ENCODE measurements at regions of chr17 and their contacts with region 1.

Region 1: DNA sequence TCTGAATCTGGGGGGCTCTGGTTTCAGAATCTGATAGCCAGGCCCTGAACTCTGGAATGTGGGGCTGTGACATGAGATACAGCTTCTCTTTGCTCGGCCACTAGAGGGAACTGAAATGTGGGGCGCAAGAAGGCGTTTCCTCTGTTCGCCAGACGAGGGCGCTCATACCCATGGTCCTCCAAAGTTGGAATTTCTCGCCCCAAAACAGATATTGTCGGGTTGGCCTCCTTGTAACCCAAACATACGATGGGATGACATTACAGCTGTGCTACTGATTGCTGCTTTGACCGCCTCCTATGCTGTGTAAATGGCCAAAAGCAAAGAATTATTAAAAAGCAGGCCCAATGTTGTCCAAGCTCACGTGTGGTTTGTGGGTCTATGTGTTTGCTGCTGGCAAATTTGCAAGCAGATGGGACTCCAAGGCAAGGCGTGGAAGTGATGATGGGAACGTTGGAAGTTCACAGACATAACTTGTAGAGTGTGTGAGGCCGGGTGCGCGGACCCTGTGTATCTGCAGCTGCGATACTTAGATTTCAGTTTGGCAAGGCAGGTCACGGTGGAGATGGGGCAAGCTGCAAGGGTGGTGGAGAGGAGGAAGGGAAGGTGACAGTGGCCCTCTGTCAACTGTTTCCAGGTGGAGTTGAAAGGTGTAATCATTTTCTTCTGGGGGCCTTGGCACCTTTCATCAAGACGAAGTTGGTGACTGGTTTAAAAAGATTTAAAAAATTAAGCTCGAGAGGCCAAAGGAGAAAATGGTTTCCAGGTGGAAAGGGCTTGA is 13.0 kb upstream of the MSI2 start:
- DNase-seq: peak; percentile 88
- H3K4me3 Mint-ChIP-seq: no peak overlapping the region
- H3K27ac Mint-ChIP-seq: no peak overlapping the region
- H3K4me1 Mint-ChIP-seq: no peaks in the 10 kb centered on the region
- H3K27me3 Mint-ChIP-seq: no peaks in the 10 kb centered on the region

Region 2: GRCh38 chr17:57033295-57033694 is 210.1 kb before region 1 on chr17:
- CTCF ChIA-PET with region 1: no interaction called
- intact Hi-C with region 1: no loop called
- DNase-seq: no peak
- H3K4me3 Mint-ChIP-seq: no peak overlapping the region
- H3K27ac Mint-ChIP-seq: no peak overlapping the region
- H3K4me1 Mint-ChIP-seq: no peaks in the 10 kb centered on the region
- H3K27me3 Mint-ChIP-seq: peaks cover 19% of the 10 kb centered on the region

Region 3: DNA sequence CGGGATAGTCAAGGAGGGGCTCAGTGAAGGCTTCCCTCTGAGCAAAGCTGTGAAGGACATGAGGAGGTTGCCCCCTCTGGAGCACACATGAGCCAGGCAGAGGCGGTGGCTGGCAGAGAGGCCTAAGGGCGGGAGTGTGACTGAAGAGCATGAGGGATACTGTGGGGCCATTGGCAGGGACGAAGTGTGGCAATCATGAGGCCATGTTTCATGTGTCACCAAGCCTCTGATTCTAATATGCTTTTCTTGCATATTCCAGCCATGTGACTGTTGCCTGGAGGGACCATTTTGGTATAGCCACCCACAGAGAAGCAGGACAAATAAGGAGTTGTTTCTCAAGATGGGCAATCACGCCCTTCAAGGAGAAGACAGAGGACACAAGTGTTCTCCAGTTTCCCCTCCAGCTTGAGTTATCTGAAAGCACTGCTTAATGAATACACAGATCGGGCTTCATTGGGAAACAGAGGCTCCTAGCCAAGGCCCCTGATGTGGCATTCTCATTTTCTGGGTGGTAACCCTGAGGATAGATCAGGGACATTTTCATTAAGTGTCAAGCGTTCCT is 90.3 kb before region 1 on chr17:
- CTCF ChIA-PET with region 1: no interaction called
- intact Hi-C with region 1: no loop called
- DNase-seq: no peak
- H3K4me3 Mint-ChIP-seq: no peak overlapping the region
- H3K27ac Mint-ChIP-seq: no peak overlapping the region
- H3K4me1 Mint-ChIP-seq: no peaks in the 10 kb centered on the region
- H3K27me3 Mint-ChIP-seq: peaks cover 5% of the 10 kb centered on the region

Region 4: DNA sequence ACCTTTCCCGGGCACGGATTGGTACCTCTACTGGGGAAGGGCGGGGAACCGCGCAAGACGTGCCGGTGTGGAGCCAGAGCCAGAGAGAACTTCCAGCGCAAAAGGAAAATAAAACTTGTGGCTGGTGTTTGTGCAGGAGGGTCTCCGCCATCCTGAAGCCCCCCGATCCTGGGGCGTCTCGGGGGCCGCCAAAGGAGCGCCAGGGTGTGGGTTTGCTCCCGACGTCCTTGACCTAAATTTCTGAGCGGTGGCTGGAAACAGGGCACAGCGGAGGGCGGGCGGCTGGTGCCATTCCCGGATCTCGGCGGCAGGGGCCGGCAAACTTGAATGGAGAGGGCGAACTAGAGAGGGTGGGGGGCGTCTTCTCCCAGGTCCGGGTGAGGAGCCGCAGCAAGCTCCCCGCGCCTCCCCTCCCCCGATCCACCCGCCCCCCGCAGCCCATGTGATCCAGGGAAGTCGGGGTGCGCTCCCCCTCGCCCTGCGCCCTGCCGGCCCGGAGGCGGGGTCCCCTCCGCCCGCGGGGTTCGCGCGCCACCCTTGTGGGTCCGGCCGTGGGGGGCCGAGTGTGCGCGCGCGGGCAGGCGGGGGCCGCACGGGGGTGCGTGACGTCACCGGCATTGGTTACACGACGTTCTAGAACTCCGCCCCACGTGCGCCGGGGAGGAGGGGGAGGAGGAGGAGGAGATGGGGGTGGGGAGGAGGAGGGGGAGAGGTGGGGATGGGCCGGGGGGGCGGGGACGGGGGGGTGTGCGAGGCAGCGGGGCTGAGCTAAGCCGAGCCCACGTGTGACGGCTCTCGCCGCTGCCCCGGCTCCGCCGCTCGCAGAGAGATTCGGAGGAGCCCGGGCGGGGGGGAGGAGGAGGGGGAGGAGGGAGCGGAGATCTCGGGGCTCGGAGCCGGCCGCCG is 12.7 kb after region 1 on chr17 and contains the start of gene MSI2:
- CTCF ChIA-PET with region 1: interaction called, 33 read pairs
- intact Hi-C with region 1: no loop called
- DNase-seq: peak; percentile 88
- H3K4me3 Mint-ChIP-seq: peak within 1 kb of the TSS; percentile 90
- H3K27ac Mint-ChIP-seq: peak within 1 kb of the TSS; percentile 86
- H3K4me1 Mint-ChIP-seq: peaks cover 38% of the 10 kb centered on the region
- H3K27me3 Mint-ChIP-seq: no peaks in the 10 kb centered on the region
- total RNA-seq, gene MSI2: 38.8 to 39.0 TPM

Region 5: DNA sequence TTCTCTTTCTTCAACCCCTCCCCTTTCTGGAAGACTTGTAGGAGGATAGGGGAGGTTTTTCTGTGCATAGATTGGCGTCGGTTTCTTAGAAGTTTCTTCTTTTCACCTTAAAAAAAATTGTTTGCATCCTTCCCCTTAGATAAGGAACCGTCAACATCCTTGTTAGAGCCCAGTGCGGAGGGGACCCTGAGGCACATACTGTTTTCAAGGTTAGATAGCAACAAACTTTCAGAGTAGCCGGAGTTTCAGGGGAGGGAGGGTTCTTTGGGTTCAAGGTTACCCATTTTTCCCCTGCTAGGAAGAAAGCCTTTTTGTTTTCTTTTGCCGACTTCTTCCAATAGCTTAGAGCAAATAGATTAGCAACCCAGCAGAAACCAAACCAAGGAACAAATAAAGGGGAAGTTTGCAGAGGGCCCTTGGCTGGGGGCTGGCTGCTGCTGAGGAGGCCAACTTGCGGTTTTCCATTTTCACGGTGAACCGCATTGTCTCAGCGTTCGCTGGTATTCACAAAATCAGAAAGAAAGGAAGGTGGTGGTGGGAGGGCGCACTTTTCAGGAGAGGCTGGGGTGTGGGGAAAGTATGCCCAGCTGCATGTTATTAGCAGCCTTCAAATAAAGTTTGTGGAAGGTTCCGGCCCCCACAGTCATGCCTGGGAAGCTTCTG is 41.8 kb after region 1 on chr17:
- CTCF ChIA-PET with region 1: interaction called, 4 read pairs
- intact Hi-C with region 1: loop called (anchors 2 kb)
- DNase-seq: peak; percentile 65
- H3K4me3 Mint-ChIP-seq: peak overlapping the region; percentile 50
- H3K27ac Mint-ChIP-seq: no peak overlapping the region
- H3K4me1 Mint-ChIP-seq: peaks cover 59% of the 10 kb centered on the region
- H3K27me3 Mint-ChIP-seq: no peaks in the 10 kb centered on the region

Region 6: GRCh38 chr17:57440522-57441485 is 197.4 kb after region 1 on chr17:
- CTCF ChIA-PET with region 1: interaction called, 46 read pairs
- intact Hi-C with region 1: loop called (anchors 1 kb)
- DNase-seq: peak; percentile 93
- H3K4me3 Mint-ChIP-seq: no peak overlapping the region
- H3K27ac Mint-ChIP-seq: peak overlapping the region; percentile 92
- H3K4me1 Mint-ChIP-seq: peaks cover 80% of the 10 kb centered on the region
- H3K27me3 Mint-ChIP-seq: no peaks in the 10 kb centered on the region

Region 7: DNA sequence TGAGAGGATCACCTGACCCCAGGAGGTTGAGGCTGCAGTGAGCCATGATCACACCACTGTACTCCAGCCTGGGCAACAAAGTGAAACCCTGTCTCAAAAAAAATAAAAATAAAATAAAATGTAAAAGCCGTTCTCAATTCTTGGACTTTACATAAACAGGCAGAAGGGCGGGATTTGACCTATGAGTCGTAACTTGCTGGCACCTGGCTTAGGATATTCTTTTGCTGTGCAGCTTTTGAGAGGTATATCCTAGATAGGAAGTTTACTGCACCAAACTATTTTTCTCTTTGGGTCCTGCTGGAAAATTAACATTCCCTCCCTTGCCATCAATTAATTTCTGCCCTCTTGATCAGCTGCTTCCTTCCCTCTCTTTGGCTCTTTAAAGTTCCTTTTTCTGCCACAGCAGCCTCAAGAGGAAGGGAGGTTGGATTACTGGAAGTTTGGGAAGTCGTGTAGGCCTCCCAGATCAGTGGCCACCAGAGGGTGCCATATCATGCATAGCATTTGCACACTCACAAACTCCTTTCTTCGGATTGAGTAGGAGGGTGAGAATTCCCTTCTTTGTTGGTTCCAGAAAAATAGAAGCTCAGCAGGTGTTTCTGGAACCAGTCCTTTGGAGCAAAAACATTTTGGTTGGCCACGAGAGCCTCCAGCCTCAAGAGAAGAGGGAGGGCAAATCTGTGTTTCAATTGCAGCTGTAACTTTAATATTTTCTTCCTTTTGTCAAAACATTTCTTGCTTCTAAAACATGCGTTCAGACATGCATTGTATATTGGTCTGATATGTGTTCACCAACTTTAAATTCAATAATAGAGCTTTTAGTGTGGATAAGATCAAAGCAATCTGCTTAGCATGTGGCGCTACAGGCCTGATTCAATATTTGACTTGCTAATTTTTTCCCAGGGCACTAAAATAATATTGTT is 354.4 kb after region 1 on chr17:
- CTCF ChIA-PET with region 1: interaction called, 15 read pairs
- intact Hi-C with region 1: loop called (anchors 1 kb)
- DNase-seq: peak; percentile 72
- H3K4me3 Mint-ChIP-seq: no peak overlapping the region
- H3K27ac Mint-ChIP-seq: peak overlapping the region; percentile 96
- H3K4me1 Mint-ChIP-seq: peaks cover 51% of the 10 kb centered on the region
- H3K27me3 Mint-ChIP-seq: no peaks in the 10 kb centered on the region

Region 8: GRCh38 chr17:57747221-57748017 is 504.1 kb after region 1 on chr17:
- CTCF ChIA-PET with region 1: interaction called, 21 read pairs
- intact Hi-C with region 1: loop called (anchors 1 kb)
- DNase-seq: peak; percentile 52
- H3K4me3 Mint-ChIP-seq: no peak overlapping the region
- H3K27ac Mint-ChIP-seq: no peak overlapping the region
- H3K4me1 Mint-ChIP-seq: no peaks in the 10 kb centered on the region
- H3K27me3 Mint-ChIP-seq: peaks cover 2% of the 10 kb centered on the region

Region 9: GRCh38 chr17:57833179-57833939 is 590.0 kb after region 1 on chr17:
- CTCF ChIA-PET with region 1: interaction called, 4 read pairs
- intact Hi-C with region 1: loop called (anchors 2 kb)
- DNase-seq: peak; percentile 83
- H3K4me3 Mint-ChIP-seq: no peak overlapping the region
- H3K27ac Mint-ChIP-seq: no peak overlapping the region
- H3K4me1 Mint-ChIP-seq: peaks cover 4% of the 10 kb centered on the region
- H3K27me3 Mint-ChIP-seq: no peaks in the 10 kb centered on the region